B cell (primary cell): ENCODE measurements at regions of chr1 and their contacts with region 1.

Region 1: DNA sequence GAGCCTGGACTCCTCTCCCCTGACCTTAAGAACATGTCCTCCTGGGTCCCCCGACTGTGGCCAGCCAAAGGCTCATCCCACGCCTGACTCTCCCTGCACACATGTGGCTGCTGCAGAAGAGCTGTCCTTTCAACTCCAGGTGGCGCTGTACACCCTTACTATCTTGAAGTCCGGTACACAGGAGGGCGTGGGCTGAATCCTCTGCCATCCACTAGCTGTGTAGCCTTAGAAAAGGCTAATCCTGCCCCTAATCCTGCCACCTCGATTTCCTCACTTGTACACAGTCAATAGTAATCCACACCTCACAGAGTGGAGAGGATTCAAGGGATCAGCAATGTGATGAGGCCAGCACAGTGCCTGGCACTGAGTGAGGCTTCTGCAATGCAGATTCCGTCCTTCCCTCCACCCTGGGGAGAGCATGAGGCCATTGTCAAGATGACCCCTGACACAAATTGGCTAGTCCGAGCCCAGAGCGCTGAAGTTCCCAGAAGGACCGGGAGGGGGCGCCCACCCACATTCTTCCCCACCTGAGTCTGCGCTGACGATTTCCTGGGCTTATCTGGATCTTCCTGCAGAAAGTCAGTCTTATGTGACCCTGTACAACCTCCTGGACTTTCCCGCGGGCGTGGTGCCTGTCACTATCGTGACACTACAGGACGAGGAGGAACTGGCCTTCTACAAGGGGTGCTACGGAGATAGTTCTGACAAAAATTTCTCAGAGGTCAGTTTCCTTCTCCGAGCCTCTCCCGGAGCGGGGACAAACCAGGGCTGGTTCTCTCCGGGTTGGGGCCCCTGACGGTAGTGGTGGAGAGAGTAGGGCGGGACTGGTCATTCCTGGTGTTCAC is 47.1 kb upstream of the DMBX1 start:
- DNase-seq: peak; percentile 69
- ATAC-seq: peak; percentile 74
- H3K4me3 ChIP-seq: peak overlapping the region in 4 of 5 experiments; percentile 11 to 63 (median 34)
- H3K4me3 Mint-ChIP-seq: peak overlapping the region; percentile 85
- H3K27ac ChIP-seq: no peak overlapping the region
- H3K27ac Mint-ChIP-seq: no peak overlapping the region
- H3K4me1 ChIP-seq: peaks cover 6 to 12% of the 10 kb centered on the region in 2 donors
- H3K4me1 Mint-ChIP-seq: peaks cover 16% of the 10 kb centered on the region
- H3K27me3 ChIP-seq: peaks cover 0 to 33% (median 14%) of the 10 kb centered on the region in 4 experiments
- H3K27me3 Mint-ChIP-seq: peaks cover 34% of the 10 kb centered on the region
- CTCF ChIP-seq: peak; percentile 96

Region 2: DNA sequence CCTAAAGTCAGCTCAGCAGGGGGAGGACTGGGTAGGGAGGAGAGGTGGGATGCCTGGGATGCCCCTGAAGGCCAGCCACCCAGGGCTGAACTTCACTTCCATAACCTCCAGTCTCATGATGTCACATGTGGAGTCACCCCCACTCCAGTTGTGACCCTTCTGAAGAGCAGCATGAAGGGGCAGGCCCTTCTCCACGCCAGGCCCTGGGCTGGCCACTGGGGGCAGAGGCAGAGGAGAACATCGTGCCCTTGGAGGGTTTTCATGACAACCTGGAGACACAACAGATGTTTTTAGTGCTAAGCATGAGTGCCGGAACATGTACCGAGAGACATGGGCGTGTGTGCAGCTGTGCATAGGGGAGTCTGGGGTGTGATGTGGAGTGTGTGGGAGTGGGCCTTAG is 10.8 kb before region 1 on chr1:
- CTCF ChIA-PET with region 1: interaction called, 38 read pairs
- POLR2A ChIA-PET with region 1: no interaction called
- intact Hi-C with region 1: no loop called
- DNase-seq: no peak
- ATAC-seq: no peak
- H3K4me3 ChIP-seq: no peak overlapping the region
- H3K4me3 Mint-ChIP-seq: no peak overlapping the region
- H3K27ac ChIP-seq: no peak overlapping the region
- H3K27ac Mint-ChIP-seq: no peak overlapping the region
- H3K4me1 ChIP-seq: no peaks in the 10 kb centered on the region
- H3K4me1 Mint-ChIP-seq: no peaks in the 10 kb centered on the region
- H3K27me3 ChIP-seq: no peaks in the 10 kb centered on the region
- H3K27me3 Mint-ChIP-seq: peaks cover 29% of the 10 kb centered on the region
- CTCF ChIP-seq: no peak

Region 3: DNA sequence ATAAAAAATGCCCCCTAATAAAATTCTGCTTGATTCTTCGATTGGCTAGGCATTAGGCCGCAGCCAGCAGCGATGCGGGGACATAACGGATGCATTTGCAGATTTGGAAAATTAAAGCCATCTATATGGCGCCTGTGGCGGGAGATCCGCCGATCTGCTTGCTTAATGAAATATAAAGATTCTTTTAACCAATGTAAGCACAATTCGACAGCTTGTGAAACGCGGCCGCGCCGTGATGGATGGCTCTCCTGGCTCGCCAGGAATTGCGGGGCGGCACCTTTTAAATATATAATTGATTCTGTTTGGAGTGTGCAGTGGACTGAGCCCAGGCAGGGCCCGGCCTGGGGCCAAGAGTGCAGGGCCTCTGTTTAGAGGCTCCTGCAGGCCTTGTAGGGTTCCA is 55.1 kb after region 1 on chr1:
- CTCF ChIA-PET with region 1: no interaction called
- POLR2A ChIA-PET with region 1: no interaction called
- intact Hi-C with region 1: no loop called
- DNase-seq: no peak
- ATAC-seq: no peak
- H3K4me3 ChIP-seq: no peak overlapping the region
- H3K4me3 Mint-ChIP-seq: no peak overlapping the region
- H3K27ac ChIP-seq: no peak overlapping the region
- H3K27ac Mint-ChIP-seq: no peak overlapping the region
- H3K4me1 ChIP-seq: no peaks in the 10 kb centered on the region
- H3K4me1 Mint-ChIP-seq: no peaks in the 10 kb centered on the region
- H3K27me3 ChIP-seq: peaks cover 0 to 30% (median 4%) of the 10 kb centered on the region in 4 experiments
- H3K27me3 Mint-ChIP-seq: peaks cover 49% of the 10 kb centered on the region
- CTCF ChIP-seq: no peak

Region 4: DNA sequence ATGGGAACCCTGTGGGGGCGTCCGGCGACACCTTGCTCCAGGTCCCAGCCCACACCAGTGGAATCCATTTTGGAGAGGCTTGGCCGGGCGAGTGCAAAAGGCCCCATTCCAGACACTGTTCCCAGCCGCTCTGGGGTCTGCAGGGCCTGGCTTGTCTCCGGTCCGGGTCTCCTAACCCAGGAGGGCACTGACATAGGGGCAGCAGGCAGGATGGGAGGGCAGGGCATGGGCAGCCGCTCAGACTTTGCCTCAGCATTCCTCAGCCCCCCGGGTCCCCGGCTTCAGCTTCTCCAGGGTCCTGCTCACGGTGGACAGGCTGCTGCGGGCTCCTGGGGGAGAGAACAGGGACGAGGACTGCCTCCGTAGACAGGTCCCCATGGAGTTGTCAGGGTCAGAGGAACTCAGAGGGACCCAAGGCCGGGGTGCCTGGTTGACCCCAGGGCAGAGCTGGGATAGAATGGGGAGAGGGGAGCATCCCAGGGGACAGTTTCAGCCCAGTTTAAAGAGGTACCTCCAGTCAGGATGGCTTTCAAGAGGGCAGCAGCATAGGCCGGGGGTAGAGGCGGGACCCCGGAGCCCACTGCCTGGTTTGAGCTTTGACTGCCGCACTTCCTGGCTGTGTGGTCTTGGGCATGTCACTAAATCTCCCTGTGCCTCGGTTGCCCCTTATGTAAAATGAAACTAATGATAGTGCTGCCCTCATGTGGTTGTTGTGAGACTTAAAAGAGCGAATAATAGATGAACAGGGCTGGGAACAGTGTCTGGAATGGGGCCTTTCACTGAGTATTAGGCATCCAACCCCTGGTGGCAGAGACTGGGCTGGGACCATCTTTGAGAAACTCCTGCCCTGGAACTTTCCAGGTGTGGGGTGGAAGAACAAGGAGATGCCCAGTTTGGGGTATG is 105.2 kb after region 1 on chr1:
- CTCF ChIA-PET with region 1: interaction called, 3 read pairs
- POLR2A ChIA-PET with region 1: no interaction called
- intact Hi-C with region 1: loop called (anchors 5 kb)
- DNase-seq: peak; percentile 30
- ATAC-seq: no peak
- H3K4me3 ChIP-seq: no peak overlapping the region
- H3K4me3 Mint-ChIP-seq: no peak overlapping the region
- H3K27ac ChIP-seq: no peak overlapping the region
- H3K27ac Mint-ChIP-seq: no peak overlapping the region
- H3K4me1 ChIP-seq: no peaks in the 10 kb centered on the region
- H3K4me1 Mint-ChIP-seq: peaks cover 2% of the 10 kb centered on the region
- H3K27me3 ChIP-seq: peaks cover 0 to 30% (median 6%) of the 10 kb centered on the region in 4 experiments
- H3K27me3 Mint-ChIP-seq: peaks cover 62% of the 10 kb centered on the region
- CTCF ChIP-seq: peak; percentile 30